ENCODE measurements at regions of chr16 and their contacts with region 1.

Region 1: DNA sequence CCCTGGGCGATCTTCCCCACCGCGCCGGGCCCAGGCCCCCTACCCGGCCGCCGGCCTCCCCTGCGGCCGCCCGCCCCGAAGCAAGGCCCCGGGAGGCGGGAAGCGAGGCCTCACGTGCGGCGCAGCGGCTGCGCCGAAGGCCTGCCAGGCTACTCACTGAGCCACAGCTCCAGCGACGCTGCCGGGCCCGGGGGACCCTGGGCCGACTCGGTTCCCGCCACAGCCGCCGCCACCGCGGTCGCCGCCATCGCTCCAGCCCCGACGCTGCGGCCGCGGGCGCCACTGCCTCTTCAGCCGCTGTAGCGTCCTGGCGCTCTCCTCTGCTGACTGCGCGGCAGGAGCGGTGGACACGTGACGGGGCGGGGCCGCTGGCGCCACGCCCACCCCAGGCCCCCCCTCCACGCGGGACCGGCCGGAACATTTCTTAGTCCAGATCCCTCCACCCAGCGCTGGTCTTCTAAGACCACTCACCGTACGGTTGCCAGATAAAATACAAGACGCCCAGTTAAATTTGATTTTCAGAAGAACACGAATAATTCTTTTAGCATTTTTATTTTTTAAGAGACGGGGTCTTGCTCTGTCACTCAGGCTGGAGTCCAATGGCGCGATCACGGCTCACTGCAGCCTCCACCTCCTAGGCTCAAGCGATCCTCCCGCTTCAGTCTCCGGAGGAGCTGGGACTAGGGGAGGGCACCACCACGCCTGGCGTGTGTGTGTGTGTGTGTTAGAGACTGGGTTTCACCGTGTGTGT is at the start of gene GGA2:
- DNase-seq: peak; percentile 91
- H3K4me3 ChIP-seq: peak within 1 kb of the TSS; percentile 10 to 69 (median 60)
- H3K27ac ChIP-seq: peak within 1 kb of the TSS; percentile 27
- H3K4me1 ChIP-seq: peaks cover under 1% of the 10 kb centered on the region
- H3K27me3 ChIP-seq: no peaks in the 10 kb centered on the region
- CTCF ChIP-seq: no peak
- POLR2A ChIP-seq: peak; percentile 88
- total RNA-seq, gene GGA2: 67.5 and 73.1 TPM in 2 replicates

Region 2: DNA sequence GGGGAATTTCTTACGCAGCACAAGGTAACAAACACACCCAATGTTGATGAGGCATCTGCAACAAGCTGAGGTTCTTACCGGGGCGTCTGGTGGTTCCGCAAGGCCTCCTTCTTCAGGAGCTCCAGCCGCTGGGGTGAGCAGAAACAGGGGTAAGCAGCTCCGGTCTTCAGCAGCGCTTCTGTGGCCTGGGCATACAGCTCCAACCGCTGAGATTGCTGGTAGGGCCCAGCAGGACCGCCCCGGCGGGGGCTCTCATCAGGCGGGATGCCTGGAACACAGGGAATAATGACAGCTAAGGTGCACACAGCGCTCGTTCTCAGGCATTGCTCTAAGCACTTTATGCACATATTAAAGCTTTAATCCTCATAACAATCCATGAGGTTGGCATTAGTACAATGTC is 34.1 kb after region 1 on chr16:
- CTCF ChIA-PET with region 1: no interaction called
- POLR2A ChIA-PET with region 1: no interaction called
- dilution Hi-C with region 1: no loop called
- intact Hi-C with region 1: no loop called
- DNase-seq: no peak
- H3K4me3 ChIP-seq: no peak overlapping the region
- H3K27ac ChIP-seq: no peak overlapping the region
- H3K4me1 ChIP-seq: no peaks in the 10 kb centered on the region
- H3K27me3 ChIP-seq: no peaks in the 10 kb centered on the region
- CTCF ChIP-seq: no peak
- POLR2A ChIP-seq: no peak

Region 3: DNA sequence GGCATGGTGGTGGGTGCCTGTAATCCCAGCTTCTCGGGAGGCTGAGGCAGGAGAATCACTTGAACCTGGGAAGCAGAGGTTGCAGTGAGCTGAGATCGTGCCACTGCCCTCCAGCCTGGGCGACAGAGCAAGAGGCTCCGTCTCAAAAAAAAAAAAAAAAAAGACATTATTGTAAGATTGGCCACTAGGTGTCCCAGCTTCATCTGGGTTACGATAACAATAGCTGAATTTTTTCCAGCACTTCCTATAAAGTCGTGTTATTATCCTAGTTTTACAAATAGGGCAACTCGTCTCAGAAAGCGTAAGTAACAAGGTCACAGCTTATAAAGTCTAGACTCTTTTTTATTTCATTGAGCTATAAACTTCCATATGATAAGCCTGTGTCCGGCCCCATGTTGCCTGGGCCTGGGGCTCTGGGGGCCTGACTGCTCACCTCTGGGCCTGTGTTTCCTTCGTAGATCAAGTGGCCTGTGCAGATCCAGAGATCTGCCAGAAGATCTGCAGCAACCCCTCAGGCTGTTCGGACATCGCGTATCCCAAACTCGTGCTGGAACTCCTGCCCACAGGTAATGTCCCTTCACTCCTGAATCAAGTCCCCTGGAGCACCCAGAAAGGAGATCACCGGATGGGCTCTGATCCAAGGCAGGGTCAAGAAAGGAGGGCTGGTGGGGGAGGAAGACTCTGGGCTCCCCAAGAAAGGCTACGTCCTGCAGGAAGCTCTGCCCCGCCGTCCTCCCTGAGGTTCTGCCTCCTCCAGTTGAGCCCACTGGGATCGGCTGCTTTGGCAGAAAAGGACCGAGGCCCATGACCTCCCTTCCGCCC is 1396.1 kb after region 1 on chr16:
- CTCF ChIA-PET with region 1: no interaction called
- POLR2A ChIA-PET with region 1: interaction called, 12 read pairs
- dilution Hi-C with region 1: no loop called
- intact Hi-C with region 1: no loop called
- DNase-seq: peak; percentile 51
- H3K4me3 ChIP-seq: no peak overlapping the region
- H3K27ac ChIP-seq: no peak overlapping the region
- H3K4me1 ChIP-seq: no peaks in the 10 kb centered on the region
- H3K27me3 ChIP-seq: no peaks in the 10 kb centered on the region
- CTCF ChIP-seq: peak; percentile 27 to 43
- POLR2A ChIP-seq: no peak